Calu3 (cell line): ENCODE measurements at regions of chrX and their contacts with region 1.

Region 1: DNA sequence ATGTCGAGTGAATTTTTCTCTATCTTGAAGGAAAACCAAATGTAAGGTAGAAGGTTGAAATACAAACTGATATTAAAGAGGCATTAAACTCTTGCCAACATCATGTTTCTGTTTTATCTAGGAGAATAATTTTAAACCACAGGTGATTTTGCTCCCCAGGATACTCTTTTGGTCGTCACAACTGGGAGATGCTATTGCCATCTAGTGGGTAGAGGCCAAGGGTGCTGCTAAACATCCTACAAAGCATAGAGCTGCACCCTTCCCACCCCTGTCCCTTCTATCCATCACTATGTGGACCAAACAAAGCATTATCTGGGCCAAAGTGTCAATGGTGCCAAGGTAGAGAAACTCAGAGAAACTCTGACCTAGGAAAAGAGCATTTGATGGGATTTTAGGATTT is 154.6 kb upstream of the MAGEB2 start:
- DNase-seq: peak; percentile 18
- H3K4me3 Mint-ChIP-seq: no peak overlapping the region
- H3K27ac Mint-ChIP-seq: no peak overlapping the region
- H3K4me1 Mint-ChIP-seq: no peaks in the 10 kb centered on the region
- H3K27me3 Mint-ChIP-seq: no peaks in the 10 kb centered on the region
- CTCF ChIP-seq: no peak

Region 2: DNA sequence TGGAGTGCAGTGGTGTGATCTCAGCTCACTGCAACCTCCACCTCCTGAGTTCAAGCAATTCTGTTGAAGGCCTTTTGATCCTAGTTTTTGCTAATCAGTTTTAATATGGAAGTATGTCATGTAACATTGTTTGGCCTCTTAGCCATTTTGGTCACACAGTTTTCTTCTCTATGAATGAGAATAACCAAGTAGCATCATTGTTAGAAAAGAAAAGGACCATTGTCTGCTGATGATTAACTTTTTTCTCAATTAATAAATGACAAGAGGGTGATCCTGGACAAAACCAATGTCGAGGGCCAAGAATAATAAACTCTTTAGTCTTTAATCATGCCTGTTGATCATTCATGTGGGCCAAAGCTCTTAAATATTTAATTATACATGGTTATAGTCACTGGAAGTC is 134.7 kb before region 1 on chrX:
- CTCF ChIA-PET with region 1: no interaction called
- intact Hi-C with region 1: loop called (anchors 10 kb)
- DNase-seq: no peak
- H3K4me3 Mint-ChIP-seq: no peak overlapping the region
- H3K27ac Mint-ChIP-seq: no peak overlapping the region
- H3K4me1 Mint-ChIP-seq: no peaks in the 10 kb centered on the region
- H3K27me3 Mint-ChIP-seq: no peaks in the 10 kb centered on the region
- CTCF ChIP-seq: no peak

Region 3: DNA sequence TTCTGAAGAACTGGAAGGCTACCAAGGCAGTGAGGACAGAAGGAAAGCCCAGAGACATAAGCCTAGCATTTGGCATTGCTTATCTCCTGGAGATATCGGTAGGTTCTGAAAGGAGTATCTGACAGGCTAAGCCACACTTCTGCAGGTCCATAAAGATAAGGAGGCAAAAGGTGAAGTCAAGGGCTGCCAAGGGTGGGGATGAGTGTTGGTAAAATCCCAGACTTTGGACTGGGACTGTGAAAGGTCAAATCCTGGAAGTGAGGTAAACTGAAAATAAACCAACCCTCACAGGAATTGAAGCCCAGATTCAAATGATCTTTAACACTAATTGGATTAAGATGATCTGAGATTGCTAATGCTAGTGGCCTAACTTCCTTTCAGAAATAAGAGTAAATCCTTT is 619.9 kb after region 1 on chrX:
- CTCF ChIA-PET with region 1: no interaction called
- intact Hi-C with region 1: no loop called
- DNase-seq: no peak
- H3K4me3 Mint-ChIP-seq: no peak overlapping the region
- H3K27ac Mint-ChIP-seq: no peak overlapping the region
- H3K4me1 Mint-ChIP-seq: peaks cover 20% of the 10 kb centered on the region
- H3K27me3 Mint-ChIP-seq: no peaks in the 10 kb centered on the region
- CTCF ChIP-seq: no peak